GM23248 (cell line): ENCODE measurements at regions of chr11 and their contacts with region 1.

Region 1: GRCh38 chr11:93895106-93895862 is 44.9 kb upstream of the VSTM5 start:
- DNase-seq: peak; percentile 79
- H3K4me3 ChIP-seq: no peak overlapping the region
- H3K27ac ChIP-seq: no peak overlapping the region
- H3K4me1 ChIP-seq: 0 out of 2 replicates have a peak, but pooled peaks cover 5% of the 10 kb centered on the region
- H3K27me3 ChIP-seq: peaks cover under 1% of the 10 kb centered on the region; the same call in 1 of the 2 replicates

Region 2: GRCh38 chr11:94424662-94425061 is 529.4 kb after region 1 on chr11:
- in situ Hi-C with region 1: loop called (anchors 10 kb)
- DNase-seq: peak; percentile 34
- H3K4me3 ChIP-seq: no peak overlapping the region
- H3K27ac ChIP-seq: no peak overlapping the region
- H3K4me1 ChIP-seq: 0 out of 2 replicates have a peak, but pooled peaks cover 3% of the 10 kb centered on the region
- H3K27me3 ChIP-seq: no peaks in the 10 kb centered on the region

Region 3: DNA sequence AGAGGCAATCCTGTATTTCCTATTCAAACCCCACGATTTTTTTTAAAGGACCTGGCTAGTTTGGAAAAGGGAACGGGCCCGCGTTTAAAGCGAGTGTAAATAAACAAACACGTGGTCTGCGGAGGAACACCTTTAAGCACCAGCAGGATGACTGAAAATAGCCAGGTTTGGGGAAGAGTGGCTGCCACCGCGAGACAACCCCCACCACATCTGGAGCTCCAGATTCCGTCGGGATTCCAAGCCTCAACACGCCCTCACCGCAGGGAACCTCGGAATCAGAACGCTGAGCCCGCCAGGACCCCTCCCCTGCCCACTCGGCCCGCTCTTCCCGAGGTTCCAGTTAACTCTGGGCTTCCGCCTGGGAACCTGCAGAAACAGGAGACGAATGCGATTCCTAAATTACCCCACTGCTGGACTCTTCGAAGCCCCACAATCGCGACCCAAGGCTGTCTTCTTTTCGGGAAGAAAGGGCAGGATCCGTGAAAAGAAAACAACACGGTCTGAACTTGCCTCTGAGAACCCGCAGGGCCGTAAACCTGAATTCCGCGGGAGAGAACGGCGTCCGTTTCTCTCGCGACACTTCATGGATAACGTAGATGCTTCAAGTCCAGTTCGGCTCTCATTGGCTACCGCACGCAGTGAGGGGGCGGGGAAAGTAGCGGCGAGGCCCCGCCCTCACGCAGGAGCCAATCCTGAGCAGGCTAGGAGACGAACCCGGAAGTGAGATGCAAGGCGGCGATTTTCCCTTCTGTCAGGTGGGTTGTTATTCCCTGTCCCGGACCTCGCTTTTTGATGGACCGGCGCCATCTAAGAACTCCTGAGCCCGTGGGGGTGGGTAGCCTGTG is 598.2 kb after region 1 on chr11 and contains the starts of genes ANKRD49 and MRE11:
- in situ Hi-C with region 1: loop called (anchors 10 kb)
- DNase-seq: peak; percentile 99
- H3K4me3 ChIP-seq: peak within 1 kb of the TSS; percentile 86
- H3K27ac ChIP-seq: peak within 1 kb of the TSS; percentile 80
- H3K4me1 ChIP-seq: peaks cover 24% of the 10 kb centered on the region
- H3K27me3 ChIP-seq: no peaks in the 10 kb centered on the region
- total RNA-seq, gene ANKRD49: 18.6 and 37.2 TPM in 2 replicates
- total RNA-seq, gene MRE11: 8.5 and 15.6 TPM in 2 replicates